Activated CD8-positive, alpha-beta memory T cell treated with anti-CD3 and anti-CD28 coated beads, Interleukin-2, amount 10 ng/mL, durations not matched to agents 7 days and 5 days (primary cell): ENCODE measurements at regions of chr1 and their contacts with region 1.

Region 1: DNA sequence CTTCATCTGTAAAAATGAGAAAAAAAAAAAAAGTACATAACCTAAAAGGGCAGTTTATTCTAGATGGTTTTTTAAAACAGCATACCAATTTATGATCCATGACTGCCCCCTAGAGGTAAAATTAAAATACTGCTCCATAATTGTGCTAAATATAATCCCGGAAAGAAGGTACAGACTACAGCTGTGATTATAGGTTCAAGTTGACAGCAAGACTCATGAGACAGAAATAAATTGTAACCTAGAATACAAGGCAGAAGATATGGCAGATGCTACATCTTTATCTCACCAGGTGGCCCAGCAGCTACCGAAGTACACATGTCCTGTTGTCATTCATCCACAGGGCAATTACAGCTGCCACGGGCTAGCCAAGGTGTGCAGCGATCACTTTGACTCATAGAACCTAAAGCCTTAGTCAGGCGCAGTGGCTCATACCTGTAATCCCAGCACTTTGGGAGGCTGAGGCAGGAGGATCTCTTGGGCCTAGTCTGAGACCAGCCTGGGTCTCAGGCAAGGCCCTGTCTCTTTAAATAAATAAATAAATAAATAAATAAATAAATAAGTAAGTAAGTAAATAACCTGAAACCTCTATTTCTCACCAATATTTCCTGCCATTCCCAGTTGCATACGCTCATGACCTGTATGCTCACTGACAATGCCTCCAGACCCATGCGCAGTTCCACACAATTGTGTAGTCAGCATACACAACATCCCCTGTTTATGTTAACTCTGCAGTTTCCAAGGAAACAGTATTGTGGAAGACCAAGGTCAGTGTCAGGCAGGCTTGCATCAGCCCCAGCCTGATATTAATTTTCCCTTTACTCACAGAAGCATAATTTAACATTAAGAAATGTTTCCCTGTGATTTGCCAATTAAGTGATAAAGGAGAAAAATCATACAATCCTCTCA is 18.3 kb upstream of the PPIE start:
- DNase-seq: no peak
- ATAC-seq: peak; percentile 67
- H3K4me3 Mint-ChIP-seq: no peak overlapping the region
- H3K27ac Mint-ChIP-seq: no peak overlapping the region
- H3K4me1 Mint-ChIP-seq: no peaks in the 10 kb centered on the region
- H3K27me3 Mint-ChIP-seq: peaks cover 63% of the 10 kb centered on the region

Region 2: DNA sequence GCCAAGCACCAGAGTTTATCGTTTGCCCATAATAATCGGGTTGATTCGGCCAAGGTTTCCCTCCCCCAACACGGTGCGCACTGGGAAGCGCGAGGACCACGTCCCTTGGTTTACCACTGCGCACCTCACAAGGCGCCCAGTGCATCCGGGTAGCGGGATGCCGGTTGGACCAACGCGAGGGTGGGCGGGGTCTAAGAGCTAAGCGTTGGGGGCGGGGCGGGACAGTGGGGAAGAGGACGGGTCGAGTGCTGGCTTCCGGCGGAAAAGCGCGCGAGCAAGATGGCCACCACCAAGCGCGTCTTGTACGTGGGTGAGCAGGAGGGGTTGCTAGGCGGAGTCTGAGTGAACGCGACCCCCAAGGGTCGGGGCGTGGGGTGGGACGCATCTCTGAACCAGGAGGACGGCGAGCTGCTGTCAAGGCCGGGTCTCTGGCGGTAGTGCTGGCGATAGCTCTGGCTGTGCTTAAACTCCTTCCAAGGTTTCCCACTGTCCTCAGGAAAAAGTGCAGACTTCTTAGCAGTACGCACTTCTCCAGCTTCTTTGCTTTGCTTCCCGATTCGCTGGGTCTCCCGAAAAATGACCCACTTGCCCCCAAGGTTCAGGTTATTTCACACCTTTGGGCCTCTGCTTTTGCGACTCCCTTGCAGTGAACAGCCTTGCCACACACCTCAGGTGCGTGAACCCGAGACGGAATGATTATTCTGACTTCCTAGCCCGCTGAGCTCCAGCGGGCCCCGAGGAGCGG is 18.4 kb after region 1 on chr1 and contains the start of gene PPIE:
- CTCF ChIA-PET with region 1: interaction called, 10 read pairs
- DNase-seq: peak; percentile 98
- ATAC-seq: peak; percentile 97
- H3K4me3 Mint-ChIP-seq: peak within 1 kb of the TSS; percentile 98
- H3K27ac Mint-ChIP-seq: peak within 1 kb of the TSS; percentile 95
- H3K4me1 Mint-ChIP-seq: peaks cover 54% of the 10 kb centered on the region
- H3K27me3 Mint-ChIP-seq: peaks cover 11% of the 10 kb centered on the region
- total RNA-seq, gene PPIE: 67.4 to 69.5 TPM